PC-9 (cell line): ENCODE measurements at regions of chr2 and their contacts with region 1.

Region 1: DNA sequence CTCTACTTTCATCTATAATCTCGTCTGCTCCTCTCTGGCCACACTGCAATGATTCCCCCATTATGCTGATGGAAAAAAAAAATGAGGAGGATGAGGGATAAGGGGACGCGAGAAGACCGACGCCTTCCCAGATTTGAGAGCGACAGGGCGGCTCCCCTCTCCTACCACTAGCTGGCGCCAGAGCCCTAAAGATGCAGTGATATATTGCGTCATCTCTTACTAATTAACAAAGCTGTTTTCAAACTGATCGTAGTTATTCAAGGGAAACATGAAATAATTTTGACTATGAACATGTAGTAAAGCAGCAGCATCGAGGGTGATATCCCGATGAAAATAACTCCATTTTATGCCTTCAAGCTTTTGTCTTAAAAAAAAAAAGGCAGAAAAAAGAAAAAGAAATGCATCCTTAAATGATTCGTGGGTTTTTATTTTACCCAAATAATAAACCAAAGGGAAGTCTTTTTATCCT is 48.0 kb upstream of the HNRNPA3 start:
- DNase-seq: peak; percentile 75 to 87
- H3K4me3 ChIP-seq: peak overlapping the region; percentile 37; the same call in 1 of the 2 replicates
- H3K27ac ChIP-seq: peak overlapping the region; percentile 65
- H3K4me1 ChIP-seq: peaks cover 55% of the 10 kb centered on the region
- H3K27me3 ChIP-seq: no peaks in the 10 kb centered on the region
- CTCF ChIP-seq: peak; percentile 100

Region 2: DNA sequence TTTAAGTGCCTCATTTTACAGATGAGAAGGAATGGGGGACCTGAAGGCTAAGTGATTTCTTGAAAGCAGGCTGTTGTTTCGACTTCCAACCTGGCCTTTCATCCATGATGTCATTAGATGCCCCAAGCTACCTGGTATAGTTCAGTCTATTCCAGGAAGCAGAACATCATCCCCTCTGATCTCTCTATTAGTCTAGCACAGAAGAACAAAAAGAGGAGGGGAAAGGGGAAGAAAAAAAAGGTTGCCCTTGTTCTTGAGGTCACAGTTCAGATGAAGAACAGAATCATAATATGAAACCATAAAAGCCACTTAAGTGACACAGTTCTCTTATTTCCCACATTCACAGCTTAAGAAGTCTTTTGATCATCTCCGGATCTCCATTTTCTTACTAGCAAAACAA is 338.3 kb before region 1 on chr2:
- CTCF ChIA-PET with region 1: no interaction called
- POLR2A ChIA-PET with region 1: interaction called, 11 read pairs
- intact Hi-C with region 1: no loop called
- DNase-seq: no peak
- H3K4me3 ChIP-seq: no peak overlapping the region
- H3K27ac ChIP-seq: no peak overlapping the region
- H3K4me1 ChIP-seq: no peaks in the 10 kb centered on the region
- H3K27me3 ChIP-seq: peaks cover 34% of the 10 kb centered on the region
- CTCF ChIP-seq: no peak

Region 3: GRCh38 chr2:177229448-177230242 is 65.0 kb after region 1 on chr2:
- CTCF ChIA-PET with region 1: interaction called, 4 read pairs
- POLR2A ChIA-PET with region 1: interaction called, 6 read pairs
- intact Hi-C with region 1: loop called (anchors 1 kb)
- DNase-seq: no peak
- H3K4me3 ChIP-seq: no peak overlapping the region
- H3K27ac ChIP-seq: no peak overlapping the region
- H3K4me1 ChIP-seq: no peaks in the 10 kb centered on the region
- H3K27me3 ChIP-seq: no peaks in the 10 kb centered on the region
- CTCF ChIP-seq: no peak

Region 4: GRCh38 chr2:177296040-177296439 is 131.4 kb after region 1 on chr2:
- CTCF ChIA-PET with region 1: interaction called, 7 read pairs
- POLR2A ChIA-PET with region 1: no interaction called
- intact Hi-C with region 1: loop called (anchors 1 kb)
- DNase-seq: no peak
- H3K4me3 ChIP-seq: no peak overlapping the region
- H3K27ac ChIP-seq: no peak overlapping the region
- H3K4me1 ChIP-seq: no peaks in the 10 kb centered on the region
- H3K27me3 ChIP-seq: no peaks in the 10 kb centered on the region
- CTCF ChIP-seq: peak; percentile 80

Region 5: DNA sequence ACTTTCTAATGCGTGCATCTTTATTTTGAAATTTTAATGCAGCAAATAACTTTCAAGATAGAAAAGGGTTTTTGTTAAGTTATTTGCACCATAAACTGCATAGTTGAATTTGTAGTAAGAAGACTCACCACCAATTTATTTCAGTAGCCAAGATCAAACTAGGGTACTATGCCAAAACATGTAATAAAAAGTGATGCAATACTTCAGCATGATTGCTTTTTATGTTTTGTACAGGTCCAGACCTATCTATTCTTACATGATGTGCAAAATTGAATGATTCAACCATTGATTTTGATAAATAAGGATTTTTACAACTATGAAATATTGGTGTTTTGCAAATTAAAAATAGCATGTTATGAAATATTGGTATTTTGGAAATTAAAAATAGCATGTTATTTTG is 254.7 kb after region 1 on chr2:
- CTCF ChIA-PET with region 1: interaction called, 4 read pairs
- POLR2A ChIA-PET with region 1: no interaction called
- intact Hi-C with region 1: loop called (anchors 1 kb)
- DNase-seq: no peak
- H3K4me3 ChIP-seq: no peak overlapping the region
- H3K27ac ChIP-seq: peak overlapping the region; percentile 43
- H3K4me1 ChIP-seq: peaks cover 11% of the 10 kb centered on the region
- H3K27me3 ChIP-seq: no peaks in the 10 kb centered on the region
- CTCF ChIP-seq: no peak

Region 6: GRCh38 chr2:177484180-177484795 is 319.7 kb after region 1 on chr2:
- CTCF ChIA-PET with region 1: no interaction called
- POLR2A ChIA-PET with region 1: no interaction called
- intact Hi-C with region 1: no loop called
- DNase-seq: no peak
- H3K4me3 ChIP-seq: no peak overlapping the region
- H3K27ac ChIP-seq: no peak overlapping the region
- H3K4me1 ChIP-seq: no peaks in the 10 kb centered on the region
- H3K27me3 ChIP-seq: no peaks in the 10 kb centered on the region
- CTCF ChIP-seq: no peak

Region 7: DNA sequence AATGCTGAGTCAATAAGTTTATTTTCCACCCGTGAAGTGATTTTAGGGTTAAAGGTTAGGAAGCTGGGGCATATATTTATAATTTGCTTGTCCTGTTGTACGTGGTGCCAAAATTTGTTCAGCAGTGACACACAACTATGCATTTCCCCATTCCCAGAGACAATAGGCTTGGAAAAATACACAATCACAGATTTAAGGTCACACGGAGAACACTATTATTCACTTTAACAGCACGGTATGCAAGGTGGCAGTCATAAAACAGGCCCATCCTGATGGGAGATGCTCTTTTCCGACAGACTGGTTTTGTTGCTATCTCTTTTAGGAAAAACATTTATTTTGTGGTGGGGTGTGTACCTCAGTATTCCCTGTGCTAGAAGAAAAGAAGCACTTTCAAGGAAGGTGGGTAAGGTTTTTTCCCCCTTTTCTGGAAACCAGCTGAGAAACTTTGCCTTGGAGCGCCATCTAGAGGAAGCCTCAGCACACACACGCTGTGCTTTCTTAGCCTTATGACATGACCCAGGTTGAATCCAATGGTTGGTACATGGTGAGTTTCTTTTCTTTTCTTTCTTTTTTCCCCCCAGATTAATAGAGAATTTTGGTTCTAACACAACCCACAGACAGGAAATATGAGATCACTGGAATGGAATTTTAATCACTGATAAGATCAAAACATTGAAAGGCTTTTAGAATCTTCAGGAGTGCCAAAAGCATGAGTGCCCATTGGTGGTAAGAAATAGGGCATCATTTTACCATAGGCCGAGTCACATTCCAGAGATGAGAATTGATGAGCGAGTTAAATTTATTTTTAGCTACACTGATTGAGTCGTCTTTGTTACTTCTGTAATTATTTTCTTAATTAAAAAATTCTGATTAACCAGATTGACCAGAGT is 560.0 kb after region 1 on chr2:
- CTCF ChIA-PET with region 1: interaction called, 3 read pairs
- POLR2A ChIA-PET with region 1: no interaction called
- intact Hi-C with region 1: loop called (anchors 1 kb)
- DNase-seq: peak in 1 of 2 experiments; percentile 61
- H3K4me3 ChIP-seq: no peak overlapping the region
- H3K27ac ChIP-seq: no peak overlapping the region
- H3K4me1 ChIP-seq: no peaks in the 10 kb centered on the region
- H3K27me3 ChIP-seq: no peaks in the 10 kb centered on the region
- CTCF ChIP-seq: peak; percentile 99